Heart right ventricle (tissue), 16 donors: ENCODE measurements at regions of chr16 and their contacts with region 1.

Region 1: DNA sequence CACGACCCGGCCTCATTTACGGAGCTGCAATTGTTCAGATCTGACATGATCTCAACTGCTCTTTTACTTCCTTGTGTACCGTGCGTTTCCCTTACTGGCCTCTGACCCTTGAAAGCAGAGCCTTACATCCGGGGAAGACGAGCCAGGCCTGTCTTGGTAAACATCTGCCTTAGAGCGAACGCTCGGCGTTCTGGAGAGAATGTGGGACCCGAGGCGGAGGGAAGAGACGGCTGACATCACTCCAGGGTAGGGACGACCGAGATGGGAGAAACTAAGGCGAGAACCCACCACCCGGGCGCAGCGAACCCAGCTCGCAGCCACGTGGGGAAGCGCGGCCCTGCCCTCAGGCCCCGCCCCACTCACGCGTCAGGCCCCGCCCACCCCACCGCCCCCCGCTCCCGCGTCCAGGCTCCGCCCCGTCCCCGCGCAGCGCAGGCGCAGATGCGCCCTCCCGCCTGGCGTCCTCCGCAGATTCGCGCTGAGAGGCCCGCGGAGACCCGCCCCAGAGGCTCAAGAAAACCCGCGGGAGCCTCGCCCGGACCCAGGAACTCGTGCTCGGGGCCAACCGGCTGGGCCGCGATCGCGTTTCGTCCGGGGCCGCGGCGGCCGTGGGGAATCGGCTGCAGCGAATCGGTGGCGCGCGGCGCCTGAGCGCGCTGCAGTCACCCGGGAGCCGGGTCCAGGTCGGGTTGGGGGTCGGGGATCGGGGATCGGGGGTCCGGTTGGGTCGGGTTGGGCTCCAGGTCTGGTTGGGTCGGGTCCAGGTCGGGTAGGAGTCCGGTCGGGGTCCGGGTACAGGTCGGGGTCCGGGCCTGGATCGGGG is at the start of gene TELO2:
- DNase-seq: peak; percentile 71 to 88
- ATAC-seq: peak; percentile 88 to 94 (median 91)
- H3K4me3 ChIP-seq: peak within 1 kb of the TSS; percentile 65 to 92 (median 80)
- H3K27ac ChIP-seq: peak within 1 kb of the TSS; percentile 82 to 97 (median 90)
- H3K4me1 ChIP-seq: peaks cover 9 to 31% (median 25%) of the 10 kb centered on the region in 9 donors
- H3K27me3 ChIP-seq: no peaks in the 10 kb centered on the region
- CTCF ChIP-seq: peak in 1 of 9 donors; percentile 9
- total RNA-seq, gene TELO2: 14.5 to 22.0 (median 19.7) TPM

Region 2: GRCh38 chr16:1533443-1533951 is 40.4 kb after region 1 on chr16 and contains the start of gene TMEM204:
- intact Hi-C with region 1: loop called in 4 of 10 experiments (anchors 5 kb)
- DNase-seq: peak; percentile 85 to 90
- ATAC-seq: peak; percentile 54 to 83 (median 77)
- H3K4me3 ChIP-seq: peak within 1 kb of the TSS; percentile 71 to 94 (median 88)
- H3K27ac ChIP-seq: peak within 1 kb of the TSS; percentile 87 to 99 (median 95)
- H3K4me1 ChIP-seq: peaks cover 32 to 77% (median 75%) of the 10 kb centered on the region in 9 donors
- H3K27me3 ChIP-seq: peaks cover 0 to 30% (median 0%) of the 10 kb centered on the region in 7 donors
- CTCF ChIP-seq: no peak
- total RNA-seq, gene TMEM204: 10.7 to 24.4 (median 18.1) TPM

Region 3: GRCh38 chr16:1543085-1543896 is 50.2 kb after region 1 on chr16:
- intact Hi-C with region 1: loop called in 3 of 10 experiments (anchors 5 to 10 kb)
- DNase-seq: peak; percentile 81 to 86
- ATAC-seq: peak; percentile 36 to 81 (median 66)
- H3K4me3 ChIP-seq: peak overlapping the region in 4 of 10 donors; percentile 0 to 25 (median 4)
- H3K27ac ChIP-seq: peak overlapping the region; percentile 16 to 99 (median 96)
- H3K4me1 ChIP-seq: peaks cover 68 to 100% (median 96%) of the 10 kb centered on the region in 9 donors
- H3K27me3 ChIP-seq: no peaks in the 10 kb centered on the region
- CTCF ChIP-seq: peak in 4 of 9 donors; percentile 13 to 22 (median 15)

Region 4: DNA sequence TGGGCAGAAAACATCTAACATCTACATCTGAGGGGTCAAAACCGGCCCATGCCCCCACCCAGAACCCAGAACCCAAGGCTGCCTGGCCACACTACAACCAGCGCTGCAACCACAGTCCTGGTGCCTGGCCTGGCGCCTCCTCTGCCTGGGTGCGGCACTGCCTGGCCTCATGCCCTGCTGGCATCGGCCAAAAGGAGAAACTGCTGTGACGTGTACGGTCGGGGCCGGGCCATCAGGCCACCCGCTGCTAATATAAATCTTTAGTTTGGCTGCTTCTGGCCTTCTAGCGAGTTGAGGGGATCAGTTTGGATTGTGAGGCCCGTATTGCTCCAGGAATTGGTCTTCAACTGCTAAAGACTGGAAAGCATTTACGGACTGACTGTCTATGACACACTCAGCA is 63.1 kb after region 1 on chr16:
- intact Hi-C with region 1: loop called in 5 of 10 experiments (anchors 5 to 10 kb)
- DNase-seq: no peak
- ATAC-seq: no peak
- H3K4me3 ChIP-seq: no peak overlapping the region
- H3K27ac ChIP-seq: no peak overlapping the region
- H3K4me1 ChIP-seq: peaks cover 2 to 59% (median 19%) of the 10 kb centered on the region in 9 donors
- H3K27me3 ChIP-seq: no peaks in the 10 kb centered on the region
- CTCF ChIP-seq: no peak

Region 5: GRCh38 chr16:1564325-1564724 is 71.2 kb after region 1 on chr16:
- intact Hi-C with region 1: loop called in 5 of 10 experiments (anchors 5 to 10 kb)
- DNase-seq: no peak
- ATAC-seq: no peak
- H3K4me3 ChIP-seq: no peak overlapping the region
- H3K27ac ChIP-seq: no peak overlapping the region
- H3K4me1 ChIP-seq: peaks cover 0 to 24% (median 5%) of the 10 kb centered on the region in 9 donors
- H3K27me3 ChIP-seq: no peaks in the 10 kb centered on the region
- CTCF ChIP-seq: peak in 8 of 9 donors; percentile 20 to 56 (median 48)

Region 6: GRCh38 chr16:1705688-1706385 is 212.7 kb after region 1 on chr16 and contains the start of gene MAPK8IP3:
- intact Hi-C with region 1: loop called in 1 of 10 experiments (anchors 10 kb)
- DNase-seq: peak; percentile 87 to 95
- ATAC-seq: peak; percentile 89 to 96 (median 93)
- H3K4me3 ChIP-seq: peak within 1 kb of the TSS; percentile 68 to 100 (median 90)
- H3K27ac ChIP-seq: peak within 1 kb of the TSS; percentile 80 to 98 (median 94)
- H3K4me1 ChIP-seq: peaks cover 17 to 49% (median 36%) of the 10 kb centered on the region in 9 donors
- H3K27me3 ChIP-seq: no peaks in the 10 kb centered on the region
- CTCF ChIP-seq: peak; percentile 89 to 99 (median 98)
- total RNA-seq, gene MAPK8IP3: 61.3 to 96.0 (median 71.7) TPM